CD4-positive, alpha-beta T cell (primary cell): ENCODE measurements at regions of chr17 and their contacts with region 1.

Region 1: DNA sequence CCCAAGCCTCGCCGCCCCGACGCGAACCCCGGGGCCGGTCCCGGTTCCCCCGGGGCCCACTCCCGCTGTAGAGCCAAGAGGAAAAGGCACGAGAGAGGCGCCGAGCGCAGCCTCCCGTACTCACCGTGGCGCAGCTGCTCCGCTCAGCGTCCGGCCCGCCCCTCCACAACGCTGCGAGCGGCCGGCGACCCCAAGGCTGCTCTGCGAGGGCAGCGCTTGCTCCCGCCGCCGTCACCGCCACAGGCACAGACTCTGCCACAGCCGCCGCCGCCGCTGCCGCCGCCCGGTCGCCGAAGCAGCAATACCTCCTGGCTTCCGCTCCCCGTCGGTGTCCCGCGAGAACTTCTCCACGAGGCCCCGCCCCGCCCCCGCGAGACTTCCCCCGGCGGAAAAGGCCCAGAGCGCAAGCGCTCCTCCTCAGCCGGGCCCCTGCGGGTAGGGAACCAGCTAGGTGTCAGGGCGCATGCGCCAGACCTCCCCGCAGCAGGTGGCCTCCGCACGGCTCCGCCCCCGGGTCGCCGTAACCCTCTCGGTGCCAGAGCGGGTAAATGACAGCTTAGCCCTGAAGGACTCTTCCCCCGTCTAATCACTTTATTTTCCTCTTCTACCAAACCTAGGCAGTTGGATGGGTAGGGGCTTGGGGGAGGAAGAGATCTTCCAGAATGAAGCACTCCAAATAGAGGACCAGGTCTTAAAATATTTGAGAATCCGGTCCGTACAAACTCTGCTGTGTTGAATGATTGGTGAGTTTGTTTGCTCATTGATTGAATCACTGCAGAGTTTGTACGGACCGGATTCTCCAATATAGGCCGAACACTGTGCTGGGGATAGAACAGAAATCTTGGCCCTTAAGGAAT is at the start of gene GRB2:
- DNase-seq: peak; percentile 99 to 100 (median 99)
- ATAC-seq: peak; percentile 79
- H3K4me3 ChIP-seq: peak within 1 kb of the TSS; percentile 100
- H3K4me3 Mint-ChIP-seq: peak within 1 kb of the TSS; percentile 99
- H3K27ac ChIP-seq: peak within 1 kb of the TSS; percentile 86 to 89
- H3K27ac Mint-ChIP-seq: peak within 1 kb of the TSS; percentile 87
- H3K4me1 ChIP-seq: peaks cover 33% of the 10 kb centered on the region
- H3K4me1 Mint-ChIP-seq: peaks cover 45% of the 10 kb centered on the region
- H3K27me3 ChIP-seq: no peaks in the 10 kb centered on the region
- H3K27me3 Mint-ChIP-seq: no peaks in the 10 kb centered on the region
- CTCF ChIP-seq: no peak
- total RNA-seq, gene GRB2: 88.8 to 92.6 TPM

Region 2: GRCh38 chr17:75182569-75183450 is 222.8 kb before region 1 on chr17 and contains the start of gene SUMO2:
- CTCF ChIA-PET with region 1: no interaction called
- POLR2A ChIA-PET with region 1: interaction called, 6 read pairs
- intact Hi-C with region 1: loop called in 1 of 2 experiments (anchors 2 kb)
- DNase-seq: peak; percentile 92 to 98 (median 96)
- ATAC-seq: peak; percentile 79
- H3K4me3 ChIP-seq: peak within 1 kb of the TSS; percentile 96
- H3K4me3 Mint-ChIP-seq: peak within 1 kb of the TSS; percentile 92
- H3K27ac ChIP-seq: peak within 1 kb of the TSS; percentile 74 to 94
- H3K27ac Mint-ChIP-seq: peak within 1 kb of the TSS; percentile 87
- H3K4me1 ChIP-seq: peaks cover 40% of the 10 kb centered on the region
- H3K4me1 Mint-ChIP-seq: peaks cover 47% of the 10 kb centered on the region
- H3K27me3 ChIP-seq: no peaks in the 10 kb centered on the region
- H3K27me3 Mint-ChIP-seq: no peaks in the 10 kb centered on the region
- CTCF ChIP-seq: peak; percentile 25
- total RNA-seq, gene SUMO2: 207 to 228 TPM

Region 3: DNA sequence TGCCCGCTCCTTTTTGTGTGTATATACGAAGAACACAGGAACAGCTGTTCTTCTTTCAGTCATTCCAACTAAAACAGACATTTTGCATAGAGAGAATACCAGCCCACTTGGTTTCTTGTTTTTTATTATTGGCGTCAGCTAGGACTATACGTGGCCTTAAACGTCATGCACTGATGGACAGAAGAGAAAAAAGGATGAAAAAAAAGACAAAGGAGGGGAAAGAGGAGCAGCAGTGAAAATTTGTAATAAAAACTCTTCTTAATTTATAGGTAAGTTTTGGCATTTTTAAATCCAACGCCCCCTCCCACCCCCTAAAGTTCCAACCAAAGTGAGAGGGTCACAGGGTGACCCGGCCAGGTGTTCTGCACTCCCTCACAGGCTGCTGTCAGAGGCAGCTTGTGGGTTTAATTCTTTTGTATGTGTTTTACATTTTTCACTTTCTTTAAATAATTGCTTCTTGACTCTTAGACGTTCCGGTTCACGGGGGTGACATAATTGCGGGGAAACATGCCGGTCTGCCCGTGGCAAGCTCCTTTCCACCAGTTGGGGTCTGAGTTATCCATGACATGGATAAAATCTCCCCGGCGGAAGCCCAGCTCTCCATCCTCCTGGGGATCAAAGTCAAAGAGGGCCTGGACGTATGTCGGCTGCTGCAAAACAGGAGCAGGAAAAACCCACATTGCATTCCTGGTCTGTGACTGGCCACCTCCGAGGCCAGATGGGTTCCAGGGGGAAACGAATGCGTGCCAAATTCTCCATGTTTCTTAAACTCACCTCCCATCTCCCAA is 85.5 kb before region 1 on chr17:
- CTCF ChIA-PET with region 1: interaction called, 25 read pairs
- POLR2A ChIA-PET with region 1: interaction called, 28 read pairs
- intact Hi-C with region 1: loop called (anchors 1 kb)
- DNase-seq: no peak
- ATAC-seq: no peak
- H3K4me3 ChIP-seq: no peak overlapping the region
- H3K4me3 Mint-ChIP-seq: no peak overlapping the region
- H3K27ac ChIP-seq: no peak overlapping the region
- H3K27ac Mint-ChIP-seq: no peak overlapping the region
- H3K4me1 ChIP-seq: peaks cover 11% of the 10 kb centered on the region
- H3K4me1 Mint-ChIP-seq: peaks cover 9% of the 10 kb centered on the region
- H3K27me3 ChIP-seq: no peaks in the 10 kb centered on the region
- H3K27me3 Mint-ChIP-seq: no peaks in the 10 kb centered on the region
- CTCF ChIP-seq: no peak

Region 4: DNA sequence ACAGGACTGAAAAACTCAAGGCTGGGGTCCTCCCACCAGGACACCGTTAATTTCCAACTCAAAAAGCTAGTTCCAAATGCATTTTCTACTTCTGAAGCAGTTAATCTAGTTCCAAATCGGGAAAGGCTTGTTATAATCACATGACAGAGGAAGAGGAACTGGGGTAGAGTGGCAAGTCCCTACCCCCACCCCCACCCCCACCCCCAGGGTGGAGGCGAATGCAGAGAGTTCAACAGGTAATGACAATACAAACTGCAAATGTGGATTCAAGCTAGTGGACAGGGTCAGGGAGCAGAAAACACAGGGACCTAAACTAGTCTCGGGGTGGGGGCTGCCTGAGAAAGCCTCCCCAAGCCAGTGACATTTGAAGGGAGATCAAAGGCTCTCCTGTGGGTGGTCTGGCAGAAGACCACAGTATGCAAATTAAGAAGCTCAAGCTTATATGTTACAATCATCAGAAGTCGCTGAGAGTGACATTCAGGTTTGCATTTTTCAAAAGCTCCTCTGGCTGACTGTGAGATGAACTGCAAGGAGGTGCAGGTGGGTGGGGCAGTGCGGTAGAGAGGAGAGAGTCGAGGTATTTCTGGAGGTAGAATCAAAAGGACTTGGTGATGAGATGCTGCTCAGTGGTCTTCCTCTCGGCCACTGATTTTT is 60.0 kb before region 1 on chr17:
- CTCF ChIA-PET with region 1: interaction called, 3 read pairs
- POLR2A ChIA-PET with region 1: interaction called, 14 read pairs
- intact Hi-C with region 1: loop called in 1 of 2 experiments (anchors 5 kb)
- DNase-seq: peak in 12 of 14 experiments; percentile 12 to 71 (median 44)
- ATAC-seq: peak; percentile 79
- H3K4me3 ChIP-seq: peak overlapping the region; percentile 15
- H3K4me3 Mint-ChIP-seq: peak overlapping the region; percentile 76
- H3K27ac ChIP-seq: peak overlapping the region in 1 of 2 donors; percentile 12
- H3K27ac Mint-ChIP-seq: peak overlapping the region; percentile 85
- H3K4me1 ChIP-seq: peaks cover 93% of the 10 kb centered on the region
- H3K4me1 Mint-ChIP-seq: peaks cover 95% of the 10 kb centered on the region
- H3K27me3 ChIP-seq: no peaks in the 10 kb centered on the region
- H3K27me3 Mint-ChIP-seq: no peaks in the 10 kb centered on the region
- CTCF ChIP-seq: no peak

Region 5: DNA sequence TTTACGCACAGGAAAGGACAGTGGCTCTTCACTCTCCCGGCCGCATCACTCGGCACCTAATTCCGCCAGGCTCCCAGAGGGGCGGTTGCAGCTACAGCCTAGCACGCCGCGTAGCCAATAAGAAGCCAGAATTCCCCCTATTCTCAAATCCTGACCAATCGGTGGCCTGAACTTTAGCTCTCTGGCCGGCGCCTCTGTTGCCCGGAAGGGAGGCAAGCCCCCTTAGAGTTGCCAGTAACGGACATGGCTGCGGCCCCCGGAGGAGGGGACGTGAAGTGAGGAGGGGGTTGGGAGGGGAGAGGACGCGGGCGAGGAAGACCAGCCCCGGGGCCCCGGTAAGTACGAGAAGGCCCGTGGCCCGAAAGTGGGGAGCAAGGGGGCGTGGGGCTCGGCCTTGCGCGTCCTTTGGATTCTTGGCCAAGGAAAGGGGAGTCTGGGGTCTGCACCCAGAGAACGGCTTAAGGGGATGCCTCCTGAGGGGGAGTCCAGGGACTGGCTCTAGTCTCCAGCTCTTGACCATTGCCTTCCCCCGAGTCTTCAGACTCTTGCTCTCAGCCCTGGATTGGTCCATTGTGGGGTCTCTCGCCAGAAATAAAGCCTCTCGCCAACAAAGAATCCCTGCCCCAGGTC is 50.9 kb after region 1 on chr17 and contains the start of gene TMEM94:
- CTCF ChIA-PET with region 1: no interaction called
- POLR2A ChIA-PET with region 1: interaction called, 11 read pairs
- intact Hi-C with region 1: loop called in 1 of 2 experiments (anchors 1 kb)
- DNase-seq: peak; percentile 79 to 97 (median 88)
- ATAC-seq: peak; percentile 96
- H3K4me3 ChIP-seq: peak within 1 kb of the TSS; percentile 70
- H3K4me3 Mint-ChIP-seq: peak within 1 kb of the TSS; percentile 100
- H3K27ac ChIP-seq: peak within 1 kb of the TSS; percentile 23 to 59
- H3K27ac Mint-ChIP-seq: peak within 1 kb of the TSS; percentile 91
- H3K4me1 ChIP-seq: peaks cover 17% of the 10 kb centered on the region
- H3K4me1 Mint-ChIP-seq: peaks cover 29% of the 10 kb centered on the region
- H3K27me3 ChIP-seq: no peaks in the 10 kb centered on the region
- H3K27me3 Mint-ChIP-seq: no peaks in the 10 kb centered on the region
- CTCF ChIP-seq: no peak
- total RNA-seq, gene TMEM94: 52.8 to 57.3 TPM

Region 6: DNA sequence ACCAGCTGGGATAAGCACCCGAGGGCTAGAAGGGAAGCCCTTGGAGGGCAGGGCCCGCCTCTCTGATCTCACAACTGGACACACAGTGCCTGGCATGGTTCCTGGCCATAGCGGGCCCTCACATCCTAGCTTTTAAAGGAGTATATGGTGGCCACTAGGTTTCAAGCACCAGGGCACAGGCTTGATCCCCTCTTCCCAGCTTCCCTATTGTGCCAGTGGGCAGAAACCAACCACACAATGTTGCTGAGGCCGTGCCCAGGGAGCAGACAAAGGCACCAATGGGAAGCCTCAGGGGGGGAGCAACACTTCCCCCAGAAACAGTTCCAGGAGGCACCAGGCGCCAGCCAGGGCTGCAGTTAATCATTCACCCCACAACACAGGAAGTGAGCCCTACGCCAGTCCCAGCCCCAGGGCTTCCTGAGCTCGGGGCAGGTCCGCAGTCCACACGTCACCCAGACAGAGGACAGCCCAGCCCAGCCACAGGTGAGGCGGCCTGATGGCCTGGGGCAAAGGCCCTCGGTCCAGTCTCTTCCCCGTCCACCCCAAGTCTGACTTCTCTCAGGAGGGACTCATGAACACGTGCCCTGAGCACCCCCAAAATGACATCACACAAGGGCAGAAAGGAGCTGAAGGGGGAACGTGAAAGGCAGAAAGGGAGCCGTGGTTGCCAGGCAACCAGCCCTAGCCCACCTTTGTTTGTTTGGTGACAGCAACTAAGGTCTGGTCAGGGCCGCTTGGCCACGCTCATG is 240.5 kb after region 1 on chr17:
- CTCF ChIA-PET with region 1: no interaction called
- POLR2A ChIA-PET with region 1: no interaction called
- intact Hi-C with region 1: no loop called
- DNase-seq: peak in 3 of 14 experiments; percentile 28 to 46 (median 38)
- ATAC-seq: peak; percentile 34
- H3K4me3 ChIP-seq: no peak overlapping the region
- H3K4me3 Mint-ChIP-seq: no peak overlapping the region
- H3K27ac ChIP-seq: no peak overlapping the region
- H3K27ac Mint-ChIP-seq: no peak overlapping the region
- H3K4me1 ChIP-seq: peaks cover 8% of the 10 kb centered on the region
- H3K4me1 Mint-ChIP-seq: no peaks in the 10 kb centered on the region
- H3K27me3 ChIP-seq: no peaks in the 10 kb centered on the region
- H3K27me3 Mint-ChIP-seq: no peaks in the 10 kb centered on the region
- CTCF ChIP-seq: no peak